Activated T-helper 1 cell treated with anti-CD3 and anti-CD28 coated beads, Interleukin-12 subunit alpha, Interleukin-12 subunit beta, Interleukin-2, Interleukin-4 antibody, amounts not matched to agents 30 ng/mL and 10 ng/mL and 1 ng/mL, durations not matched to agents 14 hours and 24 hours and 36 hours (primary cell): ENCODE measurements at regions of chr2 and their contacts with region 1.

Region 1: DNA sequence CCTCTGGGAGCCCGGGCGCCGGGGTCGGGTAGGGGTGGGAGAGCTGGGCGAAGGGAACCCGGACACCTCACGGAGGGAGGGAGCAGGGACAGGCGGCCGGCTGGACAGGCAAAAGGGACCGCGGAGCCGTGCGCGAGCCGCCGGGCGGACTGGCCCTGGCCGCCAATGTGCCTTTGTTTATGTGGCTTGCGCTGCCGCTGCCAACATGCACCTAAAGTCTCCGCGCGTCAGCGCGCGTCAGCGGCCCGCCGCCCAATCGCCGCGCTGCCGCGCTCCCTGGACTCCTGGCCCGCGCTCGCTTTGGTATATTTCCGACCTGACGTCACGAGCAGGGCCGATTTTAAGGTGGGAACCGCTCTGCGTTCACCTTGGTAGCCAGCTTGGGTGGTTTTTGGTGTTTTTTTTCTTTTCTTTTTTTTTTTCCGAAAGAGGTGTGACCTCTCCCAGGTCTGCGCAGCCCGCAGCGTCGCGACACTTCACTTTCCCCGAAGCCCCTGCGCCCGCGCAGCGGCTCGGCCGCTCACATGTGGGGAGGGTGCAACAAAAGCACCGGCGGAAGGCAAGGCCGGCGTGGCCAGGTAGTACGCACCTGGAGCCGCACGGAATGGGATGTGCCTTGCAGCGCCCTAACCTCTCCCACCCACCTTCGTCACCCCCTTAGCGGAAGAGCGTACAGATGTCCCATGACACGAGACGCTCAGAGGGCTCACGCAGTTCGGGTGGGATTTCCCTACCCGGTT is at the start of gene NR4A2:
- DNase-seq: peak; percentile 84
- H3K4me3 Mint-ChIP-seq: peak within 1 kb of the TSS; percentile 91
- H3K27ac Mint-ChIP-seq: peak within 1 kb of the TSS; percentile 97
- H3K4me1 Mint-ChIP-seq: peaks cover 74% of the 10 kb centered on the region
- H3K27me3 Mint-ChIP-seq: peaks cover 15% of the 10 kb centered on the region
- total RNA-seq, gene NR4A2: 20.5 and 21.9 TPM in 2 replicates

Region 2: GRCh38 chr2:156385242-156385641 is 52.5 kb after region 1 on chr2:
- intact Hi-C with region 1: loop called (anchors 1 kb)
- DNase-seq: no peak
- H3K4me3 Mint-ChIP-seq: no peak overlapping the region
- H3K27ac Mint-ChIP-seq: peak overlapping the region; percentile 75
- H3K4me1 Mint-ChIP-seq: peaks cover 37% of the 10 kb centered on the region
- H3K27me3 Mint-ChIP-seq: peaks cover 4% of the 10 kb centered on the region

Region 3: GRCh38 chr2:156476850-156477206 is 144.1 kb after region 1 on chr2:
- intact Hi-C with region 1: loop called (anchors 1 kb)
- DNase-seq: peak; percentile 11
- H3K4me3 Mint-ChIP-seq: peak overlapping the region; percentile 76
- H3K27ac Mint-ChIP-seq: peak overlapping the region; percentile 92
- H3K4me1 Mint-ChIP-seq: peaks cover 69% of the 10 kb centered on the region
- H3K27me3 Mint-ChIP-seq: no peaks in the 10 kb centered on the region

Region 4: GRCh38 chr2:156892467-156893281 is 560.0 kb after region 1 on chr2:
- intact Hi-C with region 1: loop called (anchors 1 kb)
- DNase-seq: no peak
- H3K4me3 Mint-ChIP-seq: no peak overlapping the region
- H3K27ac Mint-ChIP-seq: no peak overlapping the region
- H3K4me1 Mint-ChIP-seq: peaks cover 43% of the 10 kb centered on the region
- H3K27me3 Mint-ChIP-seq: peaks cover 53% of the 10 kb centered on the region

Region 5: GRCh38 chr2:157468931-157469708 is 1136.4 kb after region 1 on chr2:
- intact Hi-C with region 1: loop called (anchors 5 kb)
- DNase-seq: no peak
- H3K4me3 Mint-ChIP-seq: peak overlapping the region; percentile 71
- H3K27ac Mint-ChIP-seq: peak overlapping the region; percentile 97
- H3K4me1 Mint-ChIP-seq: peaks cover 90% of the 10 kb centered on the region
- H3K27me3 Mint-ChIP-seq: no peaks in the 10 kb centered on the region